Activated CD4-positive, alpha-beta memory T cell treated with anti-CD3 and anti-CD28 coated beads for 36 hours (primary cell): ENCODE measurements at regions of chr17 and their contacts with region 1.

Region 1: DNA sequence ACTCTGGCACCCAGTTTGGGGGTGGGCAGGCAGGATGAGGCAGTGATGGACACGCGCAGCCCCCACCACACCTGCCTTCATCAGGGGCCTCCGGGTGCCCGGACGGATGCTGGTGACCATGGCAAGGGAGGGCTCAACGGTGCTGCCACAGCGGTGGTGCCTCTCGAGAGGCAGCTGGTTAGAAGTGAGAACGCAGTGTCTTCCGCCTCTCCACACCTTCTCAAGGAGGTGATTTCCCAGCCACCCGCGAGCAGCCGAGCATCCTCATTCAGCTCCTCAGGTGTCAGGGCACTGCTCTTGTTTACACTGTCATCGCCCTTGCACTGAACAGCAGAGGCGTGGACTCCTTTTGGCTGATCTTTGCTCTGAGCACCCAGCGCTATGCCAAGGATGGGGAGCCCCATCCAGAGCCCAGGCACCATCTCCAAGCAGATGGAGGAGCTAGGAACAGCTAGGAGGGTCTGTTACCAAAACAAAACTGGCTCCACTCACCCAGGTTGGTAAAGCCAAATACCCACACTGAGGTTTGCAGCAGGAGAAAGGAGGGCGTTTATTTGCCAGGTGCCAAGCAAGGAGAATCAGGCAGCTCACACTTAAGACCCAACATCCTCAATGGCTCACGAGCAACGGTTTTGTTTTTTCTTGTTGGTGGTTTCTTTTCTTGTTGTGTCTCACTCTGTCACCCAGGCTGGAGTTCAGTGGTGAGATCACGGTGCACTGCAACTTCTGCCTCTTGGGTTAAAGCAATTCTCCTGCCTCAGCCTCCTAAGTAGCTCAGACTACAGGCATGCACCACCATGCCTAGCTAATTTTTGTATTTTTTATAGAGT is 174.3 kb upstream of the TNRC6C start:
- DNase-seq: peak; percentile 86
- H3K4me3 Mint-ChIP-seq: peak overlapping the region; percentile 44
- H3K27ac Mint-ChIP-seq: peak overlapping the region; percentile 84
- H3K4me1 Mint-ChIP-seq: peaks cover 24% of the 10 kb centered on the region
- H3K27me3 Mint-ChIP-seq: no peaks in the 10 kb centered on the region

Region 2: GRCh38 chr17:77762734-77763414 is 21.3 kb before region 1 on chr17:
- CTCF ChIA-PET with region 1: no interaction called
- POLR2A ChIA-PET with region 1: no interaction called
- intact Hi-C with region 1: no loop called
- DNase-seq: no peak
- H3K4me3 Mint-ChIP-seq: no peak overlapping the region
- H3K27ac Mint-ChIP-seq: no peak overlapping the region
- H3K4me1 Mint-ChIP-seq: no peaks in the 10 kb centered on the region
- H3K27me3 Mint-ChIP-seq: no peaks in the 10 kb centered on the region

Region 3: DNA sequence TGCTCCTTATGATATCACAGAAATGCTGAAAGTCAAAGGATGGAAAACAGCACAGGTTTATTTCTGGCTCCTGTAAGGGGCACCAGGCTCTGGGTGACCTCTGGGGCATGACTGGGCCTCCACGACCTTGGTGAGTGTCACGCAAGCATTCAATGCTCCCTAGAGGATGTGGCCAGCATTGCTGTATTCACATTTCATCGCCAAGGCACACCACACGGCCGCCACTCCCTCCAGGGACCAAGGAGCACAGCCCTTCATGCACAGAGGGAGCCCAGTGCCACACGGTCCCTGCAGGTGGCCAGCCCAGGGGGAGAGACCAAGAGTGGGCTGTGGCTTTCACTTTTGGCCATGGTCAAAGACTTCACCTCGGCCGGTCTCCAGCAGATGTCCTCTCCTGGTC is 36.9 kb after region 1 on chr17:
- CTCF ChIA-PET with region 1: no interaction called
- POLR2A ChIA-PET with region 1: no interaction called
- intact Hi-C with region 1: no loop called
- DNase-seq: peak; percentile 24
- H3K4me3 Mint-ChIP-seq: no peak overlapping the region
- H3K27ac Mint-ChIP-seq: no peak overlapping the region
- H3K4me1 Mint-ChIP-seq: no peaks in the 10 kb centered on the region
- H3K27me3 Mint-ChIP-seq: no peaks in the 10 kb centered on the region

Region 4: DNA sequence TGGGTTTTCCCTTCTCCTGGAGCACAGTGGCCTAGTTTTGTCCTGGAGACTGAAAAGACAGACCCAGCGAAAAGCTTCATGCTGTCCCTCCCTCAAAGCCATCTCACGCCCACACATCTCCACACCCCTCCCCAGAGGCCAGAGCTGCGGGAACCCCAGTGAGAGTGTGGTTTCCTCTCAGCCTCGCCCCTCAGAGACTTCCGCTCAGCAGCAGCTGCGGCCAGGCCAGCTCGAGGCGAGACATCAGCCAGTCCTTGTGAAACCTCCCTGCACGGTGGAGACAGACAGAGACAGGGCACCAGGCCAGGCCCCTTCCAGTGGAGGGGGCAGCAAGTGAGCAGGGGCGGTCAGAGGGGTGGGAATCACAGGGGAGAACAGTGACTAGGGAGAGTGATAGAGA is 97.3 kb after region 1 on chr17:
- CTCF ChIA-PET with region 1: no interaction called
- POLR2A ChIA-PET with region 1: no interaction called
- intact Hi-C with region 1: loop called (anchors 1 kb)
- DNase-seq: peak; percentile 87
- H3K4me3 Mint-ChIP-seq: peak overlapping the region; percentile 54
- H3K27ac Mint-ChIP-seq: peak overlapping the region; percentile 89
- H3K4me1 Mint-ChIP-seq: peaks cover 73% of the 10 kb centered on the region
- H3K27me3 Mint-ChIP-seq: no peaks in the 10 kb centered on the region